ENCODE measurements at regions of chr2 and their contacts with region 1.

Region 1: DNA sequence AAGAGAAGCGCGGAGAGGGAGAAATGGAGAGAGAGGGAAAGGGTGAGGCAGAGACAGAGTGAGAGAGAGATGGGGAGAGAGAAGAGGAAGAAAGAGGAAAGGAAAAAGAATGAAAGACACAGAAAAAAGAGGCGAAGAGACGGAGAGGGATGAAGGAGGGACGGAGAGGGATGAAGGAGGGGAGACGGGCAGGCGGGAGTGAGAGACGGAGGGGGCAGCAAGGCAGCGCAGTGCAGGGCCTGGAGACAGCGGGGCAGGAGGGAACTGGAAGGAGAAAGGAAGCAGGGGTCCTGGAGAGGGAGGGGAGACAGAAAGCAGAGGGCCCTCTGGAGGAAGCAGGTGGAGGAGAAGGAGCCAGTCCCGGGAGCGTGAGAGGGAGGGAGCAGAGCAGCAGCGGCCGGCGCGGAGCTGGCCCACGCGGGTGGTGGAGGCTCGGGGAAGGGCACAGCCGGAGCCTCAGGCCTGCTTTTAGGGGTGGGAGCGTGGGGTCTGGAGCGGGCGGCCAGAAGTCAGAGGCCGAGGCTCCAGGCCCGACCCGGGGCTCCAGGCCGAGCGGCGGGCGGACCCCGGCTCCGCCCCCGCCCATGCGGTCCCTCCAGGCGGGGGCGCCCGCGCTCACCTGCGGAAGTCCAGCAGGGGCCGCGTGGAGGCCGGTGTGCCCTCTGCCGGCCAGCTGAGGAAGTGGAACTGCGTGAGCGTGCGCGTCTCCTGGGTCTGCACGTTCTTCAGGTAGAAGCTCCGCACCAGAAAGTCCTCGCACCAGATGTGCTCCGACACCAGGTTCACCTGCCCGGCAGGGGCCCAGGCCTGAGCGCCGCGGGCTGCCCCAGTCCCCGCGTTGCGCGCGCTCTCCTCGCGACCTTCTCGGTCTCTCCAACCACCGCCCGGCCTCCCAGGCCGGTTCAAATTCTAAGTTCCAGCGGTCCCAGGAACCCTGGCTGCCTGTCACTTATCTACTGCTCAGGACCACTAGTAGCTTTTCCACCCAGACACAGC is 14.5 kb downstream of the PTPRN start:
- DNase-seq: peak; percentile 90
- ATAC-seq: peak; percentile 88 to 92

Region 2: DNA sequence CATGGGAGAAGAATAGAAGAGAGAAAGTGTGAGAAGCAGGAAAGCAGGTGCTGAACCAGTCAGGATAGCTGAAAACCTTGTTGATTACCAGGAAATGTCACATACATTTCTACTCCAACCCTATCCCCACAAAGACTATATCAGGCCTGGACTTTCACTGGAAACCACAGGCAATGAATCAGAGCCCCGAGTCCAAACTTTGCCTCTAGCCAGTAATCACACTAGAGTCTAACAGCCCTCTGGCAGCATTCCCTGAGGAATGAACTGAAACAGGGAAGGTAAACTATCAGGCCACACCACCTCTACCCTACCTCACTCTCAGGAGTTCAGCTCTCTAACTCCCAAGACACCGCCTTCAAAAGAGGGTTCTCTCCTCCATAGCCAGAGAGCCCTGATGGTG is 215.2 kb before region 1 on chr2:
- intact Hi-C with region 1: no loop called
- DNase-seq: no peak
- ATAC-seq: no peak

Region 3: GRCh38 chr2:219160186-219161017 is 134.3 kb before region 1 on chr2 and contains the start of gene NHEJ1:
- intact Hi-C with region 1: loop called (anchors 2 to 5 kb)
- DNase-seq: peak; percentile 97
- ATAC-seq: peak; percentile 96 to 98
- total RNA-seq, gene NHEJ1: 4.7 to 6.9 TPM

Region 4: GRCh38 chr2:219245148-219245898 is 49.3 kb before region 1 on chr2 and contains the starts of genes GLB1L and STK16:
- intact Hi-C with region 1: loop called in 1 of 2 experiments (anchors 10 kb)
- DNase-seq: peak; percentile 96
- ATAC-seq: peak; percentile 93 to 94
- total RNA-seq, gene GLB1L: 4.7 to 4.9 TPM
- total RNA-seq, gene STK16: 15.6 to 17.4 TPM

Region 5: GRCh38 chr2:219278655-219279516 is 15.8 kb before region 1 on chr2 and contains the start of gene DNAJB2:
- intact Hi-C with region 1: loop called in 1 of 2 experiments (anchors 2 kb)
- DNase-seq: peak; percentile 99
- ATAC-seq: peak; percentile 95 to 98
- total RNA-seq, gene DNAJB2: 43.7 to 63.6 TPM

Region 6: DNA sequence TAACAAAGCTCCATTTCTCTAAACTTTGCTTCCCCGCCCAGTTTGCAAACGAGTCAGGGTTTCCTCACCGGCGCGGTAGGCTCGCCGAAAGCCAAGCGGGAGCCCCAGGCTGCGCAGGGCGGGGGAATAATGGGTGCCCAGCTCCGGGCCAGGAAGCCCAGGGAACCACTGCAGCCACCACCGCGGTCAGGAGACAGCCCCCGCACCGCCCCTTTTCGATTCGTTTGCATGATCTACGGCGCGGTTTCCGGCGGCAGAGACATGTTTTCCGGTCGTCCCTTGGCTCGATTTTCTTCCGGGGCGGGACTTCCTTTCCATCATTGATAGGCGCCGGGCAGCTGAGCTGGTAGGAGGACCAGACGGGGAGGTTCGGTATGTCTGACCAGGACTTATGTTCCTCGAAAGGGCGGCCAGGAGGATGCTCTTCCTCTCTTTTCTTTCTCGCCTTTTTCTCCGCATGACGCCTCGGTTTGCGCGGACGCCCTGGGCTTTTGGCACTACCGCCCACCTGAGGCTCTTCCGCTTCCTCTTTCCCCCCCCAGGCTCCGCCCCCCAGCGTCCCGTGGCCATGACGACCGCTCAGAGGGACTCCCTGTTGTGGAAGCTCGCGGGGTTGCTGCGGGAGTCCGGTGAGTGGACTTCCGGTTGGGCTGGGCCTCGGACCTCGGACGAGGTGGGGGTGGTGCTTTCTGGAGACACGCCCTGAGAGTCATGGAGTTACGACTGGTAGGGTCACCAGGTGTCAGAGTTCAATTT is 303.1 kb after region 1 on chr2 and contains the start of gene STK11IP:
- intact Hi-C with region 1: no loop called
- DNase-seq: peak; percentile 98
- ATAC-seq: peak; percentile 96 to 98
- total RNA-seq, gene STK11IP: 12.4 to 14.1 TPM